IMR-90 (cell line): ENCODE measurements at regions of chr14 and their contacts with region 1.

Region 1: DNA sequence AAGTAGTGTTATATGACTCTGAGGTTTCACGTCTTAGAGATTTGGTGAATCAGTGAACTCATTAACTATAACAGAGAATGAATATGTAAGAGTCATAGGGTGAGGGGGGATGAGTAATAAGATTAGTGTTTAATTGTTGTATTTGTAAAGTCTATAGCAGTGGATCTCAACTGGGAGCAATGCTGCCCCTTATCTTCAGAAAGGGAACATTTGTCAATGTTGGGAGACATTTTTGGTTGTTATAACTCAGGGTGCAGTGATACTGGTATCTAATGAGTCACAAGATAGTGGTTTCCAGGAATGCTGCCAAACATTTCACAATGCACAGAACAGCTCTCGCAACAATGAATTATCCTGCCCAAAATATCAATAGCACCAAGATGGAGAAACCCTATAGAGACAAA is 1193.7 kb downstream of the GALC start:
- DNase-seq: peak; percentile 98
- ATAC-seq: peak; percentile 88
- H3K4me3 ChIP-seq: no peak overlapping the region
- H3K27ac ChIP-seq: no peak overlapping the region
- H3K4me1 ChIP-seq: peaks cover 9% of the 10 kb centered on the region
- H3K27me3 ChIP-seq: no peaks in the 10 kb centered on the region
- CTCF ChIP-seq: 0 out of 2 replicates have a peak, but pooled peaks have one; percentile 20
- POLR2A ChIP-seq: no peak
- RAD21 ChIP-seq: peak; percentile 45

Region 2: GRCh38 chr14:85565862-85566296 is 1233.4 kb before region 1 on chr14:
- CTCF ChIA-PET with region 1: no interaction called
- POLR2A ChIA-PET with region 1: no interaction called
- dilution Hi-C with region 1: no loop called
- in situ Hi-C with region 1: no loop called
- intact Hi-C with region 1: loop called (anchors 10 kb)
- DNase-seq: peak; percentile 69
- ATAC-seq: peak; percentile 11
- H3K4me3 ChIP-seq: no peak overlapping the region
- H3K27ac ChIP-seq: peak overlapping the region; percentile 100; the same call in 1 of the 2 replicates
- H3K4me1 ChIP-seq: peaks cover 9% of the 10 kb centered on the region
- H3K27me3 ChIP-seq: no peaks in the 10 kb centered on the region
- CTCF ChIP-seq: no peak
- POLR2A ChIP-seq: no peak
- RAD21 ChIP-seq: no peak

Region 3: DNA sequence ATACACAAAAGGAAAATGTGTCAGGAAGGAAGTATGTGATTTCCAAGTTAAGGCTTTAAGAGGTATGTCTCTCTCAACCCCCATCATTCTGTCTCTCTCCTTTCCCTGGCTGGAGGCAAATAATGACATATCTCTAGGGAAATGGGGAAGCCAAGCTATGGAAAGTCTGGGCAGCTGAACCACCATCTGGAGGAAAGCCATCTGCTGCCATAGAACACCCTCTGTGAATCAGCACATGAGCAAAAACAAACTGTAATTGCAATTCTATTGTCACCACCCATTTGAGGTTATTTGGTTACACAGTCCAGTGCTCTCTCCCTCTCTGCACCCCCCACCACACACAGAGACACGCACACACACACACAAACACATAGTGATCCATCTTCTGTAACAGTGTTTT is 503.1 kb before region 1 on chr14:
- CTCF ChIA-PET with region 1: no interaction called
- POLR2A ChIA-PET with region 1: no interaction called
- dilution Hi-C with region 1: no loop called
- in situ Hi-C with region 1: no loop called
- intact Hi-C with region 1: loop called (anchors 10 kb)
- DNase-seq: peak; percentile 80
- ATAC-seq: peak; percentile 93
- H3K4me3 ChIP-seq: no peak overlapping the region
- H3K27ac ChIP-seq: no peak overlapping the region
- H3K4me1 ChIP-seq: peaks cover 5% of the 10 kb centered on the region
- H3K27me3 ChIP-seq: no peaks in the 10 kb centered on the region
- CTCF ChIP-seq: no peak
- POLR2A ChIP-seq: no peak
- RAD21 ChIP-seq: no peak

Region 4: GRCh38 chr14:86654558-86655184 is 144.6 kb before region 1 on chr14:
- CTCF ChIA-PET with region 1: no interaction called
- POLR2A ChIA-PET with region 1: no interaction called
- dilution Hi-C with region 1: no loop called
- in situ Hi-C with region 1: no loop called
- intact Hi-C with region 1: loop called (anchors 5 kb)
- DNase-seq: peak; percentile 26
- ATAC-seq: no peak
- H3K4me3 ChIP-seq: no peak overlapping the region
- H3K27ac ChIP-seq: no peak overlapping the region
- H3K4me1 ChIP-seq: peaks cover 1% of the 10 kb centered on the region; the same call in 1 of the 2 replicates
- H3K27me3 ChIP-seq: no peaks in the 10 kb centered on the region
- CTCF ChIP-seq: peak; percentile 36
- POLR2A ChIP-seq: no peak
- RAD21 ChIP-seq: peak; percentile 25; the same call in 1 of the 2 replicates